ENCODE measurements at regions of chr15 and their contacts with region 1.

Region 1: DNA sequence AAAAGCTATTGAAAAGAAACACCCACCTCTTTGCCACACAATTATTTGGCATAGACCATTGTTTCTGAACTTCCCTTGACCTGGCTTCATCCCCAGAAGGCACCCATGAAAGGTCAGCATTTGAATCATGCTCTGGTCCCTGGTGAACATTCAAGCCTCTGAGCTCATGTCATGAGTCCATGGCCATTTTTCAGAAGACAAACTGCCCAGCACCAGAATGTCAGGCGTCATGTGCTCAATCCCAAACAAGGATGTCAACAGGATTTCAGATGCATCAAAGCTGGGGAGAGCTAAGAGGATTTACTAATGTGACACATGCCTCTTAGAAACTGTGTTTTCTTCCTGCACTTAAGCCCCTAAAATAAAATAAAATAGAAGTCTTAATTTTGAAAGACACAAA is 41.3 kb downstream of the TMED3 start:
- DNase-seq: no peak

Region 2: GRCh38 chr15:79989682-79990081 is 637.5 kb after region 1 on chr15:
- intact Hi-C with region 1: loop called in 1 of 2 experiments (anchors 5 kb)
- DNase-seq: no peak

Measured in posterior vena cava (tissue), 2 donors.